Right cardiac atrium (tissue), 5 donors: ENCODE measurements at regions of chr5 and their contacts with region 1.

Region 1: GRCh38 chr5:152560512-152561137 is 155.5 kb upstream of the NMUR2 start:
- DNase-seq: peak; percentile 52 to 81 (median 74)
- ATAC-seq: peak; percentile 26 to 51
- H3K4me3 ChIP-seq: no peak overlapping the region
- H3K27ac ChIP-seq: no peak overlapping the region
- H3K4me1 ChIP-seq: no peaks in the 10 kb centered on the region
- H3K27me3 ChIP-seq: no peaks in the 10 kb centered on the region

Region 2: GRCh38 chr5:152205804-152206203 is 354.8 kb before region 1 on chr5:
- intact Hi-C with region 1: no loop called
- DNase-seq: no peak
- ATAC-seq: no peak
- H3K4me3 ChIP-seq: no peak overlapping the region
- H3K27ac ChIP-seq: no peak overlapping the region
- H3K4me1 ChIP-seq: no peaks in the 10 kb centered on the region
- H3K27me3 ChIP-seq: no peaks in the 10 kb centered on the region

Region 3: GRCh38 chr5:153147891-153148623 is 587.4 kb after region 1 on chr5:
- intact Hi-C with region 1: loop called in 3 of 4 experiments (anchors 5 kb)
- DNase-seq: peak in 1 of 3 donors; percentile 30
- ATAC-seq: peak; percentile 45 to 54
- H3K4me3 ChIP-seq: no peak overlapping the region
- H3K27ac ChIP-seq: no peak overlapping the region
- H3K4me1 ChIP-seq: no peaks in the 10 kb centered on the region
- H3K27me3 ChIP-seq: no peaks in the 10 kb centered on the region